ENCODE measurements at regions of chr20 and their contacts with region 1.

Region 1: GRCh38 chr20:24501764-24502556 is 32.5 kb downstream of the SYNDIG1 start:
- DNase-seq: peak in 1 of 5 donors; percentile 76
- ATAC-seq: peak in 2 of 4 donors; percentile 10 to 34
- H3K4me3 ChIP-seq: no peak overlapping the region
- H3K27ac ChIP-seq: peak overlapping the region; percentile 64 to 98 (median 88)
- H3K4me1 ChIP-seq: peaks cover 0 to 54% (median 15%) of the 10 kb centered on the region in 12 donors
- H3K27me3 ChIP-seq: no peaks in the 10 kb centered on the region
- CTCF ChIP-seq: no peak
- POLR2A ChIP-seq: no peak

Region 2: GRCh38 chr20:24545168-24545567 is 43.2 kb after region 1 on chr20:
- intact Hi-C with region 1: no loop called
- DNase-seq: peak in 3 of 5 donors; percentile 26 to 62 (median 49)
- ATAC-seq: peak in 3 of 4 donors; percentile 56 to 88 (median 57)
- H3K4me3 ChIP-seq: no peak overlapping the region
- H3K27ac ChIP-seq: peak overlapping the region in 1 of 12 donors; percentile 11
- H3K4me1 ChIP-seq: peaks cover 0 to 6% (median 0%) of the 10 kb centered on the region in 12 donors
- H3K27me3 ChIP-seq: no peaks in the 10 kb centered on the region
- CTCF ChIP-seq: no peak
- POLR2A ChIP-seq: no peak

Region 3: GRCh38 chr20:24634855-24635254 is 132.9 kb after region 1 on chr20:
- intact Hi-C with region 1: loop called in 1 of 10 experiments (anchors 10 kb)
- DNase-seq: peak in 1 of 5 donors; percentile 46
- ATAC-seq: peak; percentile 42 to 77 (median 66)
- H3K4me3 ChIP-seq: no peak overlapping the region
- H3K27ac ChIP-seq: no peak overlapping the region
- H3K4me1 ChIP-seq: peaks cover 0 to 23% (median 0%) of the 10 kb centered on the region in 12 donors
- H3K27me3 ChIP-seq: no peaks in the 10 kb centered on the region
- CTCF ChIP-seq: no peak
- POLR2A ChIP-seq: no peak